PC-3 (cell line): ENCODE measurements at regions of chrX and their contacts with region 1.

Region 1: DNA sequence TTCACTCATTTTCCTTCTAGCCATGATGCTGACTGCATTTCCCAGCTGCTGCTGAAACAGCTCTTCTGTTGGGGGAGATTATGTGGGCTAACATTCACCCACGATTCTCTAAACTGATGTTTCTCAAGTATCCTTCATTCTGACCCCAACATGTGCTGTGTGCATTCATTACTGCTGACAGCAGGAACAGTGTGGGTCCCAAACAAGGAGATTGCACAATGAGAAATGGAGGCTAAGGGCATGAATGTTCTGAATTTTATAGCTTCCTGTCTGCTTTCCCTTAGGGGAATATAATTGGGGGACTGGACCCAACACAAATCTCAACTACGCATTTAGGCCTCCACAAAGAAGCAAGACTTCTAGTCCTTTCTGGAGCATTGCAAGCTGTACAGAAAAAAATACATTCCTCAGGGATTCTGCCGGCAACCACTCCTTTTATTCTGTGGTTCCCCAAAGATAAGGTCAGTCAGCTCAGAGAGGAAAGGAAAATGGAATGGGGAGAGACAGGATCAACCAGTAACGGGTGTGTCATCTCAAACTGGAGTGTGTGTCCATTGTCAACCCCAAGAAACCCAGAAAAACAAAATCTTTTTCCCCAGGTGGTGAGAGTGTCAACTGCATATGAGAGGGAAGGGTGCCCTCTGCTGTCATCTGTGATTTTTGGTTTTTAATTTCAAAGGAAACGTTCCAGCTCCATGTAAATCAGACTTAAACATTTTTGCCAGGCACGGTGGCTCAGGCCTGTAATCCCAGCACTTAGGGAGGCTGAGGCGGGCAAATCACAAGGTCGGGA is 81.5 kb upstream of the EGFL6 start:
- DNase-seq: peak; percentile 94
- ATAC-seq: peak; percentile 71
- H3K4me3 ChIP-seq: no peak overlapping the region
- H3K27ac ChIP-seq: peak overlapping the region; percentile 99
- H3K4me1 ChIP-seq: peaks cover 41% of the 10 kb centered on the region
- H3K27me3 ChIP-seq: no peaks in the 10 kb centered on the region
- CTCF ChIP-seq: peak; percentile 68

Region 2: GRCh38 chrX:12814420-12814819 is 673.5 kb before region 1 on chrX:
- CTCF ChIA-PET with region 1: no interaction called
- POLR2A ChIA-PET with region 1: no interaction called
- intact Hi-C with region 1: loop called (anchors 1 kb)
- DNase-seq: peak; percentile 79
- ATAC-seq: peak; percentile 66
- H3K4me3 ChIP-seq: no peak overlapping the region
- H3K27ac ChIP-seq: no peak overlapping the region
- H3K4me1 ChIP-seq: no peaks in the 10 kb centered on the region
- H3K27me3 ChIP-seq: no peaks in the 10 kb centered on the region
- CTCF ChIP-seq: peak; percentile 72

Region 3: DNA sequence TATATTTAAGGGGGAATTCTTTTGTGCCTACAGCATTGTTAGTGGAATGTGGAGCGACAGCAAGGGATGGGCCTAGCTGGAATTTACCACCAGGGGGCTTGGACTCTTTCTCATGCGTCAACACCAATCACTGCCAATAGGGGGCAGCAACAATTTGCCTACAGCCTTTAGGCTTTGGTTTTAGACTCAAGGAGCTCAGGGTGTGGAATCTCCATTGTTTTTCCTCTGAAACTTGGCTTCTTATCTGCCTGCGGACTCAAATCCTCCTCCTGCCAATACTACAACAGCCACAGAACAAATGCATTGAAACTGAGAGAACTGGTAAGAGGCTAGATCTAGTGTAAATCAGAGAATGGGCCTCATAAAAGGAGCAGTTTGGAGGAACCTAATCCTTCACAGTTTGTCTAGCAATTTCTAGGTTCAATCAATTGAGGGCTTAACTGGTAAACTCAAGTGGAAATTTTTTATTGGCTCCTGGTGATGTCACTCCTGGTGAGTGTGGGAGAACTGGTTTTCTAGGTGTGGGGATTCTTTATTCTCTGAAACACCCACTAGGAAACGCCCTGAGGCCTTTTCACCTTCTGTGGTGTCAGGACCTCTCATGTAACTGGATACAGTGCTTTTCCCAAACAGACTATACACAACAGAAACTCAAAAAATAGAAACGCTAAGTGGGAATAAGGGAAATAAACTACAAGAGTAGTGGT is 540.9 kb before region 1 on chrX:
- CTCF ChIA-PET with region 1: interaction called, 13 read pairs
- POLR2A ChIA-PET with region 1: no interaction called
- intact Hi-C with region 1: loop called (anchors 1 kb)
- DNase-seq: peak; percentile 93
- ATAC-seq: peak; percentile 86
- H3K4me3 ChIP-seq: peak overlapping the region; percentile 41
- H3K27ac ChIP-seq: peak overlapping the region; percentile 93
- H3K4me1 ChIP-seq: peaks cover 25% of the 10 kb centered on the region
- H3K27me3 ChIP-seq: no peaks in the 10 kb centered on the region
- CTCF ChIP-seq: peak; percentile 99

Region 4: GRCh38 chrX:13000301-13000811 is 487.6 kb before region 1 on chrX:
- CTCF ChIA-PET with region 1: interaction called, 3 read pairs
- POLR2A ChIA-PET with region 1: no interaction called
- intact Hi-C with region 1: loop called (anchors 1 kb)
- DNase-seq: peak; percentile 30
- ATAC-seq: no peak
- H3K4me3 ChIP-seq: peak overlapping the region; percentile 7; the same call in 1 of the 2 replicates
- H3K27ac ChIP-seq: peak overlapping the region; percentile 99
- H3K4me1 ChIP-seq: peaks cover 56% of the 10 kb centered on the region
- H3K27me3 ChIP-seq: no peaks in the 10 kb centered on the region
- CTCF ChIP-seq: no peak

Region 5: DNA sequence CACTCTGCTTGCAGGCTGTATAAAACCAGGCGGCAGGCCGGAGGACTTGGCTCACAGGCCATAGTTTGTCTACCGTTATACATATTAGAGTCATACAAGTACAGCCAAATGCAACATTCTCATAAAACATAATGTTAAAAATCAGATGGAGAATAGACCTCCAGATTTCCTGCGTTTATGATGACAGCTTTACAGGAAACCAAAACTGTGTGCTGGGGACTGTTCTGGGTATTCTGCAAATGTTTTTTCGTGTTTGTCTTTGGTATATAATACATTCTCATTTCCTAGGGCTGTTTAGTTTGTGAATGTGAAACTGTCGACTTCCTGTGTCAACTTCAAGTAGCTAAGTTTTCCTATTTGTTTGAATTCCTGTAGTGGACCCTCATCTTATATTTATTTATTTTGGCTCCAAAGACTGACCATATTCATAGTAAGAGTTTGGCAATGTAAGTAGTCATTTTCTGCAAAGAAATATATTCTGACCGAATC is 364.0 kb before region 1 on chrX:
- CTCF ChIA-PET with region 1: interaction called, 3 read pairs
- POLR2A ChIA-PET with region 1: no interaction called
- intact Hi-C with region 1: loop called (anchors 5 kb)
- DNase-seq: peak; percentile 68
- ATAC-seq: peak; percentile 83
- H3K4me3 ChIP-seq: peak overlapping the region; percentile 14; the same call in 1 of the 2 replicates
- H3K27ac ChIP-seq: peak overlapping the region; percentile 92
- H3K4me1 ChIP-seq: peaks cover 54% of the 10 kb centered on the region
- H3K27me3 ChIP-seq: no peaks in the 10 kb centered on the region
- CTCF ChIP-seq: no peak

Region 6: GRCh38 chrX:13223868-13224555 is 263.9 kb before region 1 on chrX:
- CTCF ChIA-PET with region 1: interaction called, 5 read pairs
- POLR2A ChIA-PET with region 1: no interaction called
- intact Hi-C with region 1: loop called (anchors 1 kb)
- DNase-seq: peak; percentile 94
- ATAC-seq: peak; percentile 96
- H3K4me3 ChIP-seq: no peak overlapping the region
- H3K27ac ChIP-seq: peak overlapping the region; percentile 87
- H3K4me1 ChIP-seq: peaks cover 39% of the 10 kb centered on the region
- H3K27me3 ChIP-seq: no peaks in the 10 kb centered on the region
- CTCF ChIP-seq: peak; percentile 30; the same call in 1 of the 2 replicates

Region 7: DNA sequence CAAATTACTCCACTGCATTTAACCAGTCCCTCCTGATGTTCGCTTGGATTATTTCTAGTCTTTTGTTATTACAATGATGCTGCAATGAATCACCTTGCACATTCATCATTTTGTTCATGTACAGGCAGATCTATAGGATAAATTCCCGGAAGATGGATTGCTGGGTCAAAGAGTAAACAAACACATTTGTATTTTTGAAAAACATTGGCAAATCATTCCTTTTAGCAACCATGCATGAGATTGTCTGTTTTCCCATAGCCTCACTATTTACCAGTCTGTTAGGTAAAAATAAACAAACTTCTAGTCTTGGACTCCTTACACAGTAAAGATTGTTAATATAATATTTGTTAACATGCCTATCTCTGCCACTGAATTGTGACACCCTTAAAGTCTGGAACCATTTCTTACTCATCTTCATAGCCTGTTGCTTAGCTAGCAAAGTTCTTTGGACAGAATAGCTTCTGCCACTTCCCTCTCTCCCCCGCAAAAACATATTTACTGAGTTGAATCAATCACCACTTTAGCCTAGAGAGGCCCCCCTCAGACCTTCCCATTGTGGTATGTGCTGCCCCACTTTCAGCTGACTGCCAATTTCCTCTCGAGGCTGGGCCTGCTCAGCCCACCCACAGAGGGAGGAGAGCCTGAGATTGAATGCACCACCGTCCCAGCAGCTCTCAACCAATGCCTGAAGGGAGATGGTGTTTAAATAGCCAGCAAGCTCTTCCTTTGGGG is 59.7 kb before region 1 on chrX:
- CTCF ChIA-PET with region 1: interaction called, 4 read pairs
- POLR2A ChIA-PET with region 1: no interaction called
- intact Hi-C with region 1: loop called (anchors 1 kb)
- DNase-seq: peak; percentile 88
- ATAC-seq: peak; percentile 82
- H3K4me3 ChIP-seq: peak overlapping the region; percentile 32; the same call in 1 of the 2 replicates
- H3K27ac ChIP-seq: peak overlapping the region; percentile 95
- H3K4me1 ChIP-seq: peaks cover 30% of the 10 kb centered on the region
- H3K27me3 ChIP-seq: no peaks in the 10 kb centered on the region
- CTCF ChIP-seq: no peak

Region 8: DNA sequence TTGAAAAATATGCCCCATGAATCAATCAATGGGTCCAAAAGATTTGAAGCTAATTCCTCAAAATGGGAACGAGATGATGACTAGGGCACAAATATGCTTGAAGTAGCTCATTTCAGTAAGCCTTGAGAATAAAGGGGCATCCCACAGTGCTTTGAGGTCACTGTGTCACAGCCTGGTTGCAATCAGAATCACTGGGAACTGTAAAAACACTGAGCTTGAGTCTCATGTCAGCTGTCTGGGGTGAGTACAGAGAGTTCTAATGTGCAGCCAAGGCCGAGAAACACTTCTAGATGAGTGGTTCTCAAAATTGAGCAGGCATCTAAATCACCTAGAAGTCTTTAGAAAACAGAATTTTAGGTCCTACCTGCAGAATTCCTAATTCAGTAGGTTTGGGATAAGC is 39.0 kb before region 1 on chrX:
- CTCF ChIA-PET with region 1: no interaction called
- POLR2A ChIA-PET with region 1: no interaction called
- intact Hi-C with region 1: no loop called
- DNase-seq: no peak
- ATAC-seq: no peak
- H3K4me3 ChIP-seq: no peak overlapping the region
- H3K27ac ChIP-seq: no peak overlapping the region
- H3K4me1 ChIP-seq: no peaks in the 10 kb centered on the region
- H3K27me3 ChIP-seq: no peaks in the 10 kb centered on the region
- CTCF ChIP-seq: no peak

Region 9: DNA sequence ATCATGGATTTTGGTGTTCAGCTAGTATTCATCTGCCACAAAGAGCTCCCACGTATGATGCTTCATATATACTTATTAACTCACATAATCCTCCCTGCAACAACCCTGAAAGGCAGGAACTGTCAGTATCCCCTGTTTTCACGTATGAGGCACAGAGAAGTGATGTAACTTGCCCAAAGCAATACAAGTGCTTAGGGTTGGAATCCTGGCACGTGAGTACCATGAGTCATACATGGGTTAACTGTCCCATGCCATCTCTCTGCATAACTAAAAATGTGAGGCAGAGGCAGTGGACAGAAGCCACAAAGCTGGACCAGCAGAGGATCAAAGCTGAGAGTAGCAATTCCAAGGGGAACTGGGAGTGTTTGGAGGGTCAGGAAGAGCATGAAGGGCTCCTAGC is 45.8 kb after region 1 on chrX:
- CTCF ChIA-PET with region 1: no interaction called
- POLR2A ChIA-PET with region 1: no interaction called
- intact Hi-C with region 1: no loop called
- DNase-seq: peak; percentile 48
- ATAC-seq: no peak; the same call in 1 of the 2 replicates
- H3K4me3 ChIP-seq: no peak overlapping the region
- H3K27ac ChIP-seq: no peak overlapping the region
- H3K4me1 ChIP-seq: no peaks in the 10 kb centered on the region
- H3K27me3 ChIP-seq: no peaks in the 10 kb centered on the region
- CTCF ChIP-seq: no peak

Region 10: DNA sequence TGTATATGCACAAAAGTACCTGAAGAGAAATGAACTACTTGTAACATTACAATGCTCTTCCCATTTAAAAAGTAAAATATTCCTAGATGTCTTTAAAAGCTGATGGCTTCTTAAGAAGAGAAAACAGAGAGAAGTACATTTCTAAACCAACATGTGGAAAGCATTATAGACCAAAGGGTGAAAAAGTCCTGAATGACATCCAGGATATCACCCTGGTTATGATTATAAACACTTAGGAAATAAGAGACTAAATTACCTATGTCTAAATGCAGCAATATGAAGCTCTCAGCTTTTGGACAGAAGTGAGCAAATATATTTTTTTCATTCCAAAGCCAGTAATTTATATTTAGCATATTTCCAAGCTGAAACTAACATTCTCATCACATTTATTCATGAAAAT is 59.7 kb after region 1 on chrX:
- CTCF ChIA-PET with region 1: no interaction called
- POLR2A ChIA-PET with region 1: no interaction called
- intact Hi-C with region 1: no loop called
- DNase-seq: no peak
- ATAC-seq: no peak
- H3K4me3 ChIP-seq: no peak overlapping the region
- H3K27ac ChIP-seq: no peak overlapping the region
- H3K4me1 ChIP-seq: no peaks in the 10 kb centered on the region
- H3K27me3 ChIP-seq: peaks cover 32% of the 10 kb centered on the region
- CTCF ChIP-seq: no peak

Region 11: GRCh38 chrX:13676885-13677284 is 189.0 kb after region 1 on chrX:
- CTCF ChIA-PET with region 1: no interaction called
- POLR2A ChIA-PET with region 1: no interaction called
- intact Hi-C with region 1: no loop called
- DNase-seq: no peak
- ATAC-seq: no peak
- H3K4me3 ChIP-seq: no peak overlapping the region
- H3K27ac ChIP-seq: no peak overlapping the region
- H3K4me1 ChIP-seq: no peaks in the 10 kb centered on the region
- H3K27me3 ChIP-seq: no peaks in the 10 kb centered on the region
- CTCF ChIP-seq: no peak